ENCODE measurements at regions of chr20 and their contacts with region 1.

Region 1: DNA sequence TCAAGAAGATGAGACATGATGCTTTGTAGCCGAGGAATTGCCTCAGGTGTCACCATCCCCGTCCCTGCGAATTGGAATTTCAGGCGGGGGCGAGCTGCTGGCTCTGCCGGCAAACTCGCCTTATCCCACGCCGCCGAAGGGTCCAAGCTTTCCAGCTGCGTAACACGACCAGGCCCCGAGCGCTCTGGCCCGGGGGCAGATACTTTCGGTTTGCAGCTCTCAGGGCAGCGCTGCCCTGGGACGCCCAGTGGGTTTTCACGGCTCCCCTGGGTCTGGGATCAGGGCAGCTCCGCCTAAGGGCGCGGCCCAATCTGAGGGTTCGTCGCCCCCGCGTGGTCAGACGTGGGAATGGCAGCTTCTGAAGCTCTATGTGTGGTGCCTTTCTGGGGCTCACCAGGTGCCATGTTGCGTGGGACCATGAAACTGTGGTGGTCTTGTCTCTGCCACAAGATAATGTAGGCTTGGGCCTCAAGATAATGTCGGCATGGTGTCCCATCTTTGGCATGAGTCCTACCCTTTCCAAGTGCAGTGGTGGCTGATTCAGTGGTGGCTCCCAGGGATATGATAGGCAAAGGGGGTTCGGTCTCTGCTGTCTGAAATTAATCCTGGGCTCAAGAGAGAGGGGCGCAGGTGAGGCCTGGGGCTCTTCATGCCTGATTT is 20.9 kb downstream of the PIGT start:
- DNase-seq: peak; percentile 62
- H3K4me3 ChIP-seq: peak overlapping the region; percentile 60
- H3K27ac ChIP-seq: no peak overlapping the region
- H3K27me3 ChIP-seq: peaks cover 7% of the 10 kb centered on the region
- CTCF ChIP-seq: peak; percentile 98

Region 2: GRCh38 chr20:45293041-45294002 is 143.5 kb before region 1 on chr20:
- CTCF ChIA-PET with region 1: interaction called, 42 read pairs
- POLR2A ChIA-PET with region 1: no interaction called
- DNase-seq: no peak
- H3K4me3 ChIP-seq: peak overlapping the region; percentile 58
- H3K27ac ChIP-seq: no peak overlapping the region
- H3K27me3 ChIP-seq: peaks cover 19% of the 10 kb centered on the region
- CTCF ChIP-seq: peak; percentile 94

Region 3: GRCh38 chr20:45322952-45323383 is 113.9 kb before region 1 on chr20:
- CTCF ChIA-PET with region 1: interaction called, 185 read pairs
- POLR2A ChIA-PET with region 1: interaction called, 3 read pairs
- DNase-seq: no peak
- H3K4me3 ChIP-seq: no peak overlapping the region
- H3K27ac ChIP-seq: peak overlapping the region; percentile 31
- H3K27me3 ChIP-seq: no peaks in the 10 kb centered on the region
- CTCF ChIP-seq: no peak

Region 4: DNA sequence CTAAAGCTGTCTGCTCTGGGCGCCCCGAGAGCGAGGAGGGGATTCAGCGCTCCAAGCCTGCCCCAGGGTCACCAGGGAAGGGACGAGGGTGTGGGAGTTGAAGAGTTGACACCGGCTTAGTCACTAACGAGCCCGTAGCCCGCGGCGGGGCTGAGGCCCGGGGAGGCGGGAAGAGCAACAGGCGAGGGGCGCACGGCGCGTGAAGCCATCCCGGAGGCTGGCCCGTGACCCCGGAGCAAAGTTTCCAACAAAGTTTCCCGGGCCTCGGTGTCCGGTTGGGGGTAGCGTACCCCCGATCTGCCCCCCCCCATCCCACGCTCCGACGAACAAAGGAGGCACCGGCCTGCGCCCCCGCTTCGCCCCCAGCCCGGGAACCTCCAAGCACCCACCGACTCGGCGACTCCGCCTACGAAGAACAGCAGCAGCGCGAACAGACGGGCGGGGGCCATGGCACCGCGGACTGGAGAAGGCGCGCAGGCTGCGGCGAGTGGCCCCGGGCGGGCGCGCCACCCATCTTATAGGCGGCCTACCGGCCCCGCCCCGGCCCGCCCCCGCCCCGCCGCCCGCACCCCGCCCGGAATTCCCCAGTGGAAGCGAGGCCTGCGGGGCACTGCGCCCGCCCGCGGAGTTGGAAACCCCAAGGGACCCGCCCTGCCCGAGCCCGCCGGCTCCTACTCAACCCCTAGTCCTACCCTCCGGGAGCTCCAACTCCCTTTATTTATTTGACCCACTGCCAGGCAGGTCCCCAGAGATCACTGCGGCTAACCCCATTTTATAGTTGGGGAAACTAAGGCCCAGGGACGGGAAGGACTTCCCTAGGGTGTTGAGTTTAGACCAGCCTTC is 88.7 kb before region 1 on chr20 and contains the start of gene SDC4:
- CTCF ChIA-PET with region 1: interaction called, 10 read pairs
- POLR2A ChIA-PET with region 1: interaction called, 4 read pairs
- DNase-seq: no peak
- H3K4me3 ChIP-seq: peak within 1 kb of the TSS; percentile 97
- H3K27ac ChIP-seq: peak within 1 kb of the TSS; percentile 70
- H3K27me3 ChIP-seq: no peaks in the 10 kb centered on the region
- CTCF ChIP-seq: no peak
- polyA plus RNA-seq, gene SDC4: 177 and 204 TPM in 2 replicates

Region 5: DNA sequence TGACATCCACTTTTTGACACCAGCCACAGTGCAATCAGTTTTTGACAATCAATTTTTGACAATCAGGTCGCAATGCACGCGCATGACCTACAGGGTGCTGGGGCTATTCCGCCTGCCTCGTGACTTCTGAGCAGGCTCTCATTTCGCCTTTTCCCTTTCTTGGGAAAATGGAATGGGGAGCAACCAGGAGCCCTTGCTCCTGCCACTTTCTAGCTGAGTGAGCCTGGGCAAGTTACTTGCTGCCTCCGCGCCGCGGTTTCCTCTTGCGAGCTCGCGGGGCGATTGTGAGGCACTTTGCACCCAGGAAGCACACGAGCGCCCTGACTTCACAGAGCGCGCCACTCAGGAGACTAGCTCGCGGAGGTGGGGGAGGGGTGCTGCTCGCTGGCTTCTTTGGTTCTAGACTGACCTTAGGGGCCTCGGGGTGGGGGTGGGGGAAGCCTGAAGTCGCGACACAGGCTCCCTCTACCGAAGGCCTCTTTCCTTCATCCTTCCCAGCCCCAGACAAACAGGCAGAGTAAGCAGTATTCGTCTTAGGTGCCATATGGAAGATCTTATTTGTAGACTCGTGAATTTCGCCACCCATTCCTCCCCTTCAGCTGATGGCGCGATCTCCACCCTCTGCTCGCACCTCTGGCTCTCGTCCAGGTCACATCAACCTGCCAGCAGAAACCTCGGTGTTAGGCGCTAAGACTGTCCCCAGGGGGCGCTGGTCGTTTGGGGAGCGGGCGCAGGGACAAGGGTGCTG is 63.3 kb before region 1 on chr20:
- CTCF ChIA-PET with region 1: interaction called, 194 read pairs
- POLR2A ChIA-PET with region 1: interaction called, 3 read pairs
- DNase-seq: no peak
- H3K4me3 ChIP-seq: peak overlapping the region; percentile 52
- H3K27ac ChIP-seq: no peak overlapping the region
- H3K27me3 ChIP-seq: no peaks in the 10 kb centered on the region
- CTCF ChIP-seq: peak; percentile 88

Region 6: GRCh38 chr20:45415774-45416637 is 20.9 kb before region 1 on chr20 and contains the start of gene PIGT:
- CTCF ChIA-PET with region 1: interaction called, 27 read pairs
- POLR2A ChIA-PET with region 1: interaction called, 5 read pairs
- DNase-seq: no peak
- H3K4me3 ChIP-seq: peak within 1 kb of the TSS; percentile 93
- H3K27ac ChIP-seq: peak within 1 kb of the TSS; percentile 48
- H3K27me3 ChIP-seq: no peaks in the 10 kb centered on the region
- CTCF ChIP-seq: no peak
- polyA plus RNA-seq, gene PIGT: 114 and 140 TPM in 2 replicates

Region 7: DNA sequence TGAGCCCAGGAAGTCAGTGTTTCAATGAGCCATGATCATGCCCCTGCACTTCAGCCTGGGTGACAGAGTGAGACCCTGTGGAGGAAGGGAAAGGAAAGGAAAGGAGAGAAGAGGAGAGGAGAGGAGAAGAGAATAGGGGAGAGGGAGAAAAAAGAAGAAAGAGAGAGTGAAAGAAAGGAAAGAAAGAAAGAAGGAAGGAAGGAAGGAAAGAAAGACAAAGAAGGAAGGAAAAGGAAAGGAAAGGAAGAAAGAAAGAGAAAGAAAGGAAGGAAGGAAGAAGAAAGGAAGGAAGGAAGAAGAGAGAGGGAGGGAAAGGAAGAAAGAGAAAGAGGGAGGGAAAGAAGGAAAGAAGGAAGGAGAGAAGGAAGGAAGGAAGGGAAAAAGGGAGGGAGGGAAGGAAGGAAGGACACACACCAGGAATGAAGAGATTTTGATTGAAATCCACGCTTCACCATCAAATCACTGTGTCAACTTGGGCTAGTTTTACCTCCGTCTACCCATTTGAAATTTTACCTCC is 128.0 kb after region 1 on chr20:
- CTCF ChIA-PET with region 1: no interaction called
- POLR2A ChIA-PET with region 1: no interaction called
- DNase-seq: no peak
- H3K4me3 ChIP-seq: no peak overlapping the region
- H3K27ac ChIP-seq: no peak overlapping the region
- H3K27me3 ChIP-seq: no peaks in the 10 kb centered on the region
- CTCF ChIP-seq: no peak

Measured in AG04450 (cell line).